Psoas muscle (tissue), 8 donors: ENCODE measurements at regions of chr4 and their contacts with region 1.

Region 1: GRCh38 chr4:168475745-168476144 is 4.5 kb downstream of the DDX60L start:
- DNase-seq: no peak
- ATAC-seq: no peak
- H3K4me3 ChIP-seq: no peak overlapping the region
- H3K27ac ChIP-seq: no peak overlapping the region
- H3K4me1 ChIP-seq: peaks cover 5% of the 10 kb centered on the region
- H3K27me3 ChIP-seq: no peaks in the 10 kb centered on the region
- CTCF ChIP-seq: no peak

Region 2: GRCh38 chr4:168199260-168199957 is 276.3 kb before region 1 on chr4:
- intact Hi-C with region 1: loop called in 1 of 2 experiments (anchors 10 kb)
- DNase-seq: no peak
- ATAC-seq: peak in 1 of 4 donors; percentile 57
- H3K4me3 ChIP-seq: no peak overlapping the region
- H3K27ac ChIP-seq: no peak overlapping the region
- H3K4me1 ChIP-seq: no peaks in the 10 kb centered on the region
- H3K27me3 ChIP-seq: no peaks in the 10 kb centered on the region
- CTCF ChIP-seq: no peak

Region 3: GRCh38 chr4:168440442-168441264 is 35.1 kb before region 1 on chr4:
- intact Hi-C with region 1: no loop called
- DNase-seq: no peak
- ATAC-seq: no peak
- H3K4me3 ChIP-seq: no peak overlapping the region
- H3K27ac ChIP-seq: no peak overlapping the region
- H3K4me1 ChIP-seq: no peaks in the 10 kb centered on the region
- H3K27me3 ChIP-seq: no peaks in the 10 kb centered on the region
- CTCF ChIP-seq: no peak